ENCODE measurements at regions of chr6 and their contacts with region 1.

Region 1: GRCh38 chr6:56851541-56852259 is 103.2 kb upstream of the BEND6 start:
- DNase-seq: peak in 1 of 2 donors; percentile 44
- ATAC-seq: peak; percentile 71 to 92 (median 84)
- H3K4me3 ChIP-seq: peak overlapping the region; percentile 16
- H3K4me3 Mint-ChIP-seq: peak overlapping the region; percentile 86
- H3K27ac ChIP-seq: no peak overlapping the region
- H3K27ac Mint-ChIP-seq: peak overlapping the region in 1 of 2 donors; percentile 25
- H3K4me1 ChIP-seq: peaks cover 15% of the 10 kb centered on the region
- H3K4me1 Mint-ChIP-seq: peaks cover 27% of the 10 kb centered on the region in 2 donors
- H3K27me3 ChIP-seq: no peaks in the 10 kb centered on the region
- H3K27me3 Mint-ChIP-seq: peaks cover 18 to 35% of the 10 kb centered on the region in 2 donors
- CTCF ChIP-seq: peak; percentile 36

Region 2: DNA sequence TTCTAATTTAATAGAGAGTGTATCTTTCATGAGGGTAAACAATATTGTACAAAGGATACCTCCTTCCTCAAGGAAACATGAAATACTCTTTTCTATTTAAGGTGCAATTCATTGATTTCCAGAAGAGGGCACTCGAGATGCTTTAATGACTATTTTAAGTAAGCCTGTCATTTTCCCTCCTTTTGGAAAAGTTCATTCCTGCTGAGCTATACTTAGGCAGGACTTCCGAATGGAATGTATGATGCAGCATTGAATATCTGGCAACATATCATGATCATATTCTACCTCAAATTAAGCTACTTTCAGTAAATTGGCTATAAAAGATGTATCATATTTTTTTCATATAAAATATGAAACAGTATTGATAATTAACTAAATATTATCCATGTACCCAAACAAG is 214.1 kb before region 1 on chr6:
- intact Hi-C with region 1: loop called (anchors 2 kb)
- DNase-seq: peak in 1 of 2 donors; percentile 25
- ATAC-seq: no peak
- H3K4me3 ChIP-seq: no peak overlapping the region
- H3K4me3 Mint-ChIP-seq: no peak overlapping the region
- H3K27ac ChIP-seq: no peak overlapping the region
- H3K27ac Mint-ChIP-seq: no peak overlapping the region
- H3K4me1 ChIP-seq: no peaks in the 10 kb centered on the region
- H3K4me1 Mint-ChIP-seq: no peaks in the 10 kb centered on the region
- H3K27me3 ChIP-seq: no peaks in the 10 kb centered on the region
- H3K27me3 Mint-ChIP-seq: no peaks in the 10 kb centered on the region
- CTCF ChIP-seq: peak; percentile 48

Region 3: GRCh38 chr6:56677559-56677958 is 174.1 kb before region 1 on chr6:
- intact Hi-C with region 1: no loop called
- DNase-seq: no peak
- ATAC-seq: no peak
- H3K4me3 ChIP-seq: no peak overlapping the region
- H3K4me3 Mint-ChIP-seq: no peak overlapping the region
- H3K27ac ChIP-seq: no peak overlapping the region
- H3K27ac Mint-ChIP-seq: no peak overlapping the region
- H3K4me1 ChIP-seq: no peaks in the 10 kb centered on the region
- H3K4me1 Mint-ChIP-seq: no peaks in the 10 kb centered on the region
- H3K27me3 ChIP-seq: no peaks in the 10 kb centered on the region
- H3K27me3 Mint-ChIP-seq: no peaks in the 10 kb centered on the region
- CTCF ChIP-seq: no peak